Thyroid gland (tissue), 4 donors: ENCODE measurements at regions of chr6 and their contacts with region 1.

Region 1: DNA sequence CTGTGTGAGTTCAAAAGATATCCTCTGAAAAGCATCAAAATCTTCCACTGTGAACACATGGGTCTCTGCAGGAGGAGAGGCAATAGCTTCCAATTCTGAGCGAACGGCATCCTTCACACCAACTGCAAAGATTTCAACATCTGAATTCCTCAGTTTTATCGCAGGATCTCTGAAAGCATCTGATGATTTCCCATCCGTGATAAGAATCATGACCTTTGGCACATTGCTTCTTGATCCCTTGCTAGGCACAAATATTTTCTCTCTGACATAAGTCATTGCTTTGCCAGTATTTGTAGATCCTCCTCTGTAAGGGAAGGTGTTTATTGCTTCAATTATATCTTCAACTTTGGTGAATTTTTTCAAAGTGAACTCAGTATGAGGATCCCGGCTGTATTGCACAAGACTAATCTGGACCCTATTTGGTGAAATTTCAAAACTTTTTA is 22.7 kb downstream of the COL12A1 start:
- DNase-seq: no peak
- H3K4me3 ChIP-seq: no peak overlapping the region
- H3K27ac ChIP-seq: no peak overlapping the region
- H3K4me1 ChIP-seq: no peaks in the 10 kb centered on the region
- H3K27me3 ChIP-seq: no peaks in the 10 kb centered on the region
- CTCF ChIP-seq: no peak
- POLR2A ChIP-seq: no peak

Region 2: GRCh38 chr6:75077701-75078100 is 105.4 kb before region 1 on chr6:
- intact Hi-C with region 1: loop called (anchors 10 kb)
- DNase-seq: no peak
- H3K4me3 ChIP-seq: no peak overlapping the region
- H3K27ac ChIP-seq: no peak overlapping the region
- H3K4me1 ChIP-seq: no peaks in the 10 kb centered on the region
- H3K27me3 ChIP-seq: no peaks in the 10 kb centered on the region
- CTCF ChIP-seq: no peak
- POLR2A ChIP-seq: no peak